ENCODE measurements at regions of chr1 and their contacts with region 1.

Region 1: DNA sequence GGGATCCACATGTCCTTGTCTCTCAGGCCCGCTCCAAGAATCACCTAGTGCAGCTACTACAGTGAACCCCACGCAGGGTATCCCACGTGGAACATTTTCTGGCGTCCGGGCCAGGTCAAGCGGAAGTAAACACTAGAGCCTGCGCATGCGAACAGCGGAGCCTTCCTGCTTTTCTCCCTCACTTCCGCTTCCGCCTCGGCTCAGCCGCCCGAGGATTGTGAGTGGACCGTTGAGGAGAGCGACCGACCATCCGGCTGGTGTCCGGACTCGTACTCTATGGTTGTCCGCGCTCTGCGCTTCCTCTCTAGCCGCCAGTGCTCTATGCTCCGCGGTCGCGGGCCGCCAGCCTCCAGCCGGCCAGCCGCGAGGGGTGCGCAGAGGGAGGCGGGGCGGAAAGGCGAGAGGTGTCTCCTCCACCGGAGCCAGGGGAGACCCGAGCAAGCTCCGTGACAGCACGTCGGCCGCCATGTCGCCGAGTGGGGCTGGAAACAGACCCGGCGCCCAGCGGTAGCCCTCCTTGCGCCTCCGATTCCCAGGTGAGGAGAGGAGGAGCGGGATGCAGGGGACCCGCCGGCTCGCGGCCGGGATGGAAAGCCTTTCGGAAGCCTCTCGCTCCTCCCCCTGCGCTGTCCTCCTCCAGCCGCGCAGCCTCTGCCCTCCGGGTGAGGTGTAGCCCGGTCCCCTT is at the starts of genes CNST and TFB2M:
- DNase-seq: peak; percentile 97
- ATAC-seq: peak; percentile 89
- H3K4me3 ChIP-seq: peak within 1 kb of the TSS; percentile 97
- H3K27ac ChIP-seq: peak within 1 kb of the TSS; percentile 87
- H3K4me1 ChIP-seq: peaks cover 9% of the 10 kb centered on the region
- H3K27me3 ChIP-seq: no peaks in the 10 kb centered on the region
- CTCF ChIP-seq: no peak
- EP300 ChIP-seq: no peak
- POLR2A ChIP-seq: peak; percentile 97
- RAD21 ChIP-seq: no peak
- polyA plus RNA-seq, gene CNST: 4.8 to 4.9 TPM
- polyA plus RNA-seq, gene TFB2M: 47.2 to 66.0 TPM

Region 2: DNA sequence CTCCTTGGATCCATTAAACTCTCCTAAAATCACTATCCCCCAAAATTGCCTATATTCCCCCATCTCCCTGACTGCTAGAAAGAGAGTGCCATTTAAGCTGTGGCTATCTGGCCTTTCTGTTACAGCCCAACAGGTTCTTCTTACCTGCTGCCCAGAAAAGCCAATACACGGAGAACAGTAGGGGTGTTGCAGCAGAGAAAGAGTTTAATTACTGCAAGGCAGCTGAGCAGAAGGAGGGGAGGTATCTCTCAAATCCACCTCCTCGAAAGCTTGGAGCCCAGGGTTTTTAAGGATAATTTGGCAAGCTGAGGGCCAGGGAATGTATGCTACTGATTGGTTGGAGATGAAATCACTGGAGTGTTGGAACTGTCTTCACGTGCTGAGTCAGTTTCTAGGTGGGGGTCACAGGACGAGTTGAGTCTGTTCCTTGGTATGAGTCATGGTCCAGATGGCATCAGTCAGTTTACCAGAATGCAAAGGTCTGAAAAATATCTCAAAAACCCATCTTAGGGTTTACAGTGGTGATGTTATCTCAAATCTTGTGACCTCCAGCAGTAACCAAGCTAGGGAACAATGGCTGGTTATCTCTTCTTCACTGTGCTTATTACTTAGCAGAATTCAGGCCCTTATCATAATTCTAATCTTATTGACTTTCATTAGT is 149.0 kb before region 1 on chr1:
- CTCF ChIA-PET with region 1: no interaction called
- POLR2A ChIA-PET with region 1: no interaction called
- RAD21 ChIA-PET with region 1: no interaction called
- SMC1A ChIA-PET with region 1: no interaction called
- in situ Hi-C with region 1: no loop called
- intact Hi-C with region 1: no loop called
- DNase-seq: no peak
- ATAC-seq: peak; percentile 15; the same call in 2 of the 3 replicates
- H3K4me3 ChIP-seq: no peak overlapping the region
- H3K27ac ChIP-seq: no peak overlapping the region
- H3K4me1 ChIP-seq: no peaks in the 10 kb centered on the region
- H3K27me3 ChIP-seq: no peaks in the 10 kb centered on the region
- CTCF ChIP-seq: no peak
- EP300 ChIP-seq: no peak
- POLR2A ChIP-seq: no peak
- RAD21 ChIP-seq: no peak

Region 3: GRCh38 chr1:246428542-246429308 is 137.5 kb before region 1 on chr1:
- CTCF ChIA-PET with region 1: no interaction called
- POLR2A ChIA-PET with region 1: no interaction called
- RAD21 ChIA-PET with region 1: no interaction called
- SMC1A ChIA-PET with region 1: no interaction called
- in situ Hi-C with region 1: no loop called
- intact Hi-C with region 1: no loop called
- DNase-seq: peak; percentile 40
- ATAC-seq: peak; percentile 96
- H3K4me3 ChIP-seq: no peak overlapping the region
- H3K27ac ChIP-seq: no peak overlapping the region
- H3K4me1 ChIP-seq: peaks cover 10% of the 10 kb centered on the region
- H3K27me3 ChIP-seq: no peaks in the 10 kb centered on the region
- CTCF ChIP-seq: no peak
- EP300 ChIP-seq: 0 out of 4 replicates have a peak, but pooled peaks of 1 of the 2 experiments have one; percentile 37
- POLR2A ChIP-seq: no peak
- RAD21 ChIP-seq: no peak

Region 4: GRCh38 chr1:246506674-246507481 is 59.4 kb before region 1 on chr1 and contains the start of gene SMYD3:
- CTCF ChIA-PET with region 1: interaction called, 3 read pairs
- POLR2A ChIA-PET with region 1: interaction called, 7 read pairs
- RAD21 ChIA-PET with region 1: no interaction called
- SMC1A ChIA-PET with region 1: no interaction called
- in situ Hi-C with region 1: no loop called
- intact Hi-C with region 1: loop called (anchors 2 kb)
- DNase-seq: peak; percentile 32
- ATAC-seq: peak; percentile 97
- H3K4me3 ChIP-seq: peak within 1 kb of the TSS; percentile 66
- H3K27ac ChIP-seq: peak within 1 kb of the TSS; percentile 18; the same call in 1 of the 2 replicates
- H3K4me1 ChIP-seq: peaks cover 4% of the 10 kb centered on the region; the same call in 1 of the 2 replicates
- H3K27me3 ChIP-seq: no peaks in the 10 kb centered on the region
- CTCF ChIP-seq: no peak; a peak in 1 of 6 replicates
- EP300 ChIP-seq: no peak
- POLR2A ChIP-seq: peak; percentile 81
- RAD21 ChIP-seq: no peak
- polyA plus RNA-seq, gene SMYD3: 18.8 to 24.4 TPM

Region 5: DNA sequence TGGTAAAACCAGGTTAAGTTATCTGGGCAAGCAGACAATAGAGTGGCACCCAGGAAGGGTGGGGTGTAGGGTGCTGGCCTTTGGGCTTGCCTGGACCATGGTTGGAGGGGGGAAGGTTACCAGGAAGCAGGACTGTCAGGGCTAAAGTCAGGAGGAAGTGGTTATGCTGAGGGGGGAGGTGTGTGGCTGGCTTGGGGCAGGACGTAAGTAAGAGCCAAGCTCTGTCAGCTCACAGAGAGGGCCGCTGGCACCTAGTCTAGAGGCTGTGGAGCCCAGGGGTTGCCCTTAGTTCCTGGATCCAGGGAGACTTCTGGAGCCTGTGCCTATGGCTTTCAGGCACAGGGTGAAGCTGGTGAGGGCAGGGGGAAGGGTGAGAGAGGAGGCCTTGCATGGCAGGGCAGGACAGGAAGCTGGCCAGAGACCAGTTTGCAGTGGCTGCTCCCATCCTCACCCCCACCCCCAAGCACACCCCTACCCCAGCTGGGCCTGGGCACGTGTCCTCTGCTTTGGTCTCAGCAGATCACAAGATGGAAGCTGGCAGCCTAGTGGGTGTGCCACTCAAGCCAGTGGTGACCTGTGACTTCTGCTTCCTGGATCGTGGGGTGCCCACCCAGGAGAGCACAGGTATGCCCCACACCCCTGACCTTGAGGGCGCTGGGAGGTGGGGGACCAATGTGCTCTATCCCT is 38.7 kb before region 1 on chr1:
- CTCF ChIA-PET with region 1: no interaction called
- POLR2A ChIA-PET with region 1: no interaction called
- RAD21 ChIA-PET with region 1: no interaction called
- SMC1A ChIA-PET with region 1: no interaction called
- in situ Hi-C with region 1: no loop called
- intact Hi-C with region 1: no loop called
- DNase-seq: no peak
- ATAC-seq: peak; percentile 69
- H3K4me3 ChIP-seq: no peak overlapping the region
- H3K27ac ChIP-seq: peak overlapping the region; percentile 44
- H3K4me1 ChIP-seq: peaks cover 8% of the 10 kb centered on the region; the same call in 1 of the 2 replicates
- H3K27me3 ChIP-seq: no peaks in the 10 kb centered on the region
- CTCF ChIP-seq: no peak
- EP300 ChIP-seq: no peak
- POLR2A ChIP-seq: peak; percentile 52
- RAD21 ChIP-seq: no peak

Region 6: GRCh38 chr1:246579818-246580217 is 13.5 kb after region 1 on chr1:
- CTCF ChIA-PET with region 1: interaction called, 3 read pairs
- POLR2A ChIA-PET with region 1: interaction called, 7 read pairs
- RAD21 ChIA-PET with region 1: interaction called, 6 read pairs
- SMC1A ChIA-PET with region 1: interaction called, 17 read pairs
- in situ Hi-C with region 1: no loop called
- intact Hi-C with region 1: no loop called
- DNase-seq: no peak
- ATAC-seq: peak; percentile 88
- H3K4me3 ChIP-seq: peak overlapping the region; percentile 56; the same call in 1 of the 2 replicates
- H3K27ac ChIP-seq: peak overlapping the region; percentile 72; the same call in 1 of the 2 replicates
- H3K4me1 ChIP-seq: peaks cover 24% of the 10 kb centered on the region
- H3K27me3 ChIP-seq: no peaks in the 10 kb centered on the region
- CTCF ChIP-seq: no peak
- EP300 ChIP-seq: no peak
- POLR2A ChIP-seq: no peak
- RAD21 ChIP-seq: no peak

Region 7: DNA sequence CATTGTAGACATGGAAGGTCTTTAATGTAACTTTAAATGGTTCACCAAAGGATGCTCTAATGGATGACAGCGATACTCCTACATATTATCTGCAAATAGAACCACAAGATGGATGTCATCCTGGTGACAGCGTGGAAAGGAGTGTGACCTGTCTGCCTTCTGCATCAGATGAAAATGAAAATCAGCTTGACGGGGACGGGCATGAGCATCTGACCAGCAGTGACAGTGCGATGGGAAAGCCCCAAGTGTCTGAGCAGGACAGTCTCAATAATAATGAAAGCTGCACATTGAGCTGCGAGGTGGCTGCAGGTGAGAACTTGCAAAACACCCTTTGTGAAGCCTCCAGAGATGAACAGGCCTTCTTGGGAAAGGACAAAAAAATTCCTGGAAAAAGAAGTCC is 25.2 kb after region 1 on chr1:
- CTCF ChIA-PET with region 1: interaction called, 3 read pairs
- POLR2A ChIA-PET with region 1: interaction called, 4 read pairs
- RAD21 ChIA-PET with region 1: interaction called, 7 read pairs
- SMC1A ChIA-PET with region 1: interaction called, 7 read pairs
- in situ Hi-C with region 1: no loop called
- intact Hi-C with region 1: loop called (anchors 1 kb)
- DNase-seq: peak; percentile 67
- ATAC-seq: peak; percentile 99
- H3K4me3 ChIP-seq: peak overlapping the region; percentile 29; the same call in 1 of the 2 replicates
- H3K27ac ChIP-seq: peak overlapping the region; percentile 64
- H3K4me1 ChIP-seq: peaks cover 12% of the 10 kb centered on the region; the same call in 1 of the 2 replicates
- H3K27me3 ChIP-seq: no peaks in the 10 kb centered on the region
- CTCF ChIP-seq: no peak
- EP300 ChIP-seq: no peak
- POLR2A ChIP-seq: peak; percentile 66
- RAD21 ChIP-seq: no peak

Region 8: DNA sequence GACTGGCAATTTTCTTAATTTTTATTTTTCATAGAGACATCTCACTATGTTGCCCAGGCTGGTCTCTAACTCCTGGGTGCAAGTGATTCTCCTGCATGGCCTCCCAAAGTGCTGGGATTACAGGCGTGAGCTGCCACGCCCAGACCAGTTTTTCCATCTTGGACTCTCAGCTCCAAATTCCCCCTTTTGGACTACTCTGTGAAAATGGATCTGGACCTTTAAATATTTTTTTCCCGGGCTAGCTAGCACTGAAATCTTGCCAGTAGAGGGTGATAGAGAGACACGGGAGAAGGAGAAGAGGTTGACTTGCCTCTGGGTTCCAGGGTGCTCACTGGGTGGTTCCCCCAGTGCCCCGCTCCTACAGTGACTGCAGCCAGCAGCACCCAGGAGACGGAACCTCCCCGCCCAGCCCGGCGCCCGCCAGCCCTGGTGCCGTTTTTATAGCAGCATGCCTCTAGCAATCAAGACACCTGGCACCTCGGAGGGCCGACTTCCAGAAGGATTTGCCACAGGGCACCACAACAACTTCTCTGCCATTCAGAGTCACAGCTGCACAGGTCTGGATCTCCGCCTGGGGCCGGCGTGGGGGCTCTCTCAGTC is 123.2 kb after region 1 on chr1:
- CTCF ChIA-PET with region 1: interaction called, 16 read pairs
- POLR2A ChIA-PET with region 1: no interaction called
- RAD21 ChIA-PET with region 1: no interaction called
- SMC1A ChIA-PET with region 1: no interaction called
- in situ Hi-C with region 1: no loop called
- intact Hi-C with region 1: no loop called
- DNase-seq: peak; percentile 34
- ATAC-seq: peak; percentile 99
- H3K4me3 ChIP-seq: peak overlapping the region; percentile 63; the same call in 1 of the 2 replicates
- H3K27ac ChIP-seq: no peak overlapping the region
- H3K4me1 ChIP-seq: no peaks in the 10 kb centered on the region
- H3K27me3 ChIP-seq: no peaks in the 10 kb centered on the region
- CTCF ChIP-seq: peak; percentile 84 to 91 (median 90)
- EP300 ChIP-seq: no peak
- POLR2A ChIP-seq: no peak
- RAD21 ChIP-seq: peak; percentile 82

Region 9: GRCh38 chr1:246699095-246699735 is 132.9 kb after region 1 on chr1:
- CTCF ChIA-PET with region 1: interaction called, 7 read pairs
- POLR2A ChIA-PET with region 1: no interaction called
- RAD21 ChIA-PET with region 1: no interaction called
- SMC1A ChIA-PET with region 1: no interaction called
- in situ Hi-C with region 1: no loop called
- intact Hi-C with region 1: loop called (anchors 5 kb)
- DNase-seq: peak; percentile 76
- ATAC-seq: peak; percentile 97
- H3K4me3 ChIP-seq: 0 out of 2 replicates have a peak overlapping the region, but pooled peaks have one; percentile 13
- H3K27ac ChIP-seq: peak overlapping the region; percentile 50
- H3K4me1 ChIP-seq: peaks cover 4% of the 10 kb centered on the region
- H3K27me3 ChIP-seq: no peaks in the 10 kb centered on the region
- CTCF ChIP-seq: peak; percentile 79 to 90 (median 90)
- EP300 ChIP-seq: no peak
- POLR2A ChIP-seq: no peak; the same call in 1 of the 2 replicates
- RAD21 ChIP-seq: peak; percentile 89